ENCODE measurements at regions of chr1 and their contacts with region 1.

Region 1: DNA sequence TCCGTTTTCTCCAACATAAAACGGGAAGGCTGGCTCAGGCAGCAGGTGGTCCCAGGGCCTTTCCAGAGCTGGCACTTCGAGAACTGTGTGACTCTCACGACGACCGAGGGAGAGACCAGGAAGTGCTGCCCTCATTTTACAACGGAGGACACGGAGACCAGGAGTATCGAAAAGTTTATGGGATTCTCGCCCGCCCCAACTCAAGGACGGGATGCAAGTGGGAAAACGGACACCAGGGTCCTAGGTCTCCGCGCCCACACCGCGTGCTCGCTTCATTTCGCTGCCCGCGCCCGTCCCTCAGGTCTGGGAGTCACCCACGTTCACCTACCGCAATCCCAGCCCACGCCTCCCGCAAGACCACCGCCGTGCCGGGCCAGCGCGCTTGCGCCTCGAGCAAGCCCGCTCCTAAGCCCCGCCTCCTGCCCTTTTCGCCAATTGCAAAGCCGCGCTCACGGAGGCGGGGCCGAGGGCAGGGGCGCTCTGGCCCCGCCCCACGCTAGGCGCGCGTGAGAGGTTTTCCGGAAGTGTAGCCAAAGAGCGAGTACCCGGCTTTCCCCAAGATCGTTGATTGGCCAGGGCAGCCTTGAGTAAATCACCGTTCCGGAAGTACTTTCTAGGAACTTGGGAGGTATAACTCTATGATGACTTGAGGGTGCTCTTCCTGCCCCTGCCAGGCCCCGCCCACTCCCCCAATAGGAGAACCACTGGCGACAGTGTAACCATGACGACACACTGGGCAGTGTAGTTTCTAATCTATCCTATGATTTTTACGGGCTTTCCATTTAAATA is at the start of gene PARS2:
- DNase-seq: peak; percentile 98
- ATAC-seq: peak; percentile 100
- total RNA-seq, gene PARS2: 4.2 TPM

Region 2: DNA sequence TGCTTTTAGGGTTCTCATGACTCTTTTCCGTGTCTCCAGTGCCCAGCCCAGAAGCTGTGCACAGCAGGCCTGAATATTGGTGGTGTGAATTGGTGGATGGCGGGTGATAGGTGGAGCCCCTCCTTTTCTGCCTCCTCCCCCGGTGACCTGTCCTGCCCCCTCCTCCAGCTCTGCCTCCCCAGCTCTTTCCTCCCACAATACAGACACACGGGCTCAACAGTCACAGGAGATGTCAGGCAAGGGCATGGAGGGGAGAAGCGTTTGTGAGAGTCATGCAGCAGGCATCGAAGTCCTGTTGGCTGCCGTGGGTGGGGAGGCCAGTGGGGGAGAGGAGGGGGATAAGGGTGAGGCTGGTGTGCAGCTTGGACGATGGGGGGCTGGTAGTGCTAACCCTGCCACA is 66.0 kb before region 1 on chr1:
- intact Hi-C with region 1: no loop called
- DNase-seq: no peak
- ATAC-seq: no peak

Region 3: GRCh38 chr1:54715493-54716298 is 48.6 kb before region 1 on chr1 and contains the start of gene TTC4:
- intact Hi-C with region 1: loop called (anchors 5 kb)
- DNase-seq: peak; percentile 93
- ATAC-seq: peak; percentile 99
- total RNA-seq, gene TTC4: 12.8 TPM

Region 4: DNA sequence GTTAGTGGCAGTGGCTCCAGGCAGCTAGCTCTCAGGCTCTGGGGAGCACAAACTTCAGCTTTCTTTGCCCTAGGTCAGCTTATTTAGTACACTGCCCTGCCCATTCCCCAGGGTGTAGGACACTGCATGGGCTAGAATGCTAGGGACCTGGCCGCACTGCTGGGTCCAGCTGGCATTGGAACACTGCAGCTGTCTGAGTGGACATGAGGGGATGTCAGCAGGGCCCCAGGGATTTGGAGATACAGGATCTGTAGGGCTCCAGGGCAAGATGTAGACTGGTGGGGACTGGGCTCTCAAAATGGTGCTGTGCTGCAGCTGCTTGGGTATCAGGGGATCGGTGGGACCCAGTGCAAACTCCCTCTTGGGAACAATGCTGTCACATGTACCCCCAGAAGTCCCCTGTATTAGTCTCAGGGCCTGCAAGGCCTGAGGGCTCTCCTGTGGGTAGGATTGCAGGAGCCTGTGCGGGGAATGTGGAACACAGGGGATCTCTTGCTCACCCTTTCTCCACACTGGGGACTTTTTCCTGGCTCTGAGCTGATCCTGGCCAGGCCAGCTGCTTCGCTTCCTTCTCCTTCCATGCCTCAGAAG is 62.0 kb after region 1 on chr1:
- intact Hi-C with region 1: no loop called
- DNase-seq: no peak
- ATAC-seq: no peak

Region 5: GRCh38 chr1:54850737-54851136 is 86.4 kb after region 1 on chr1:
- intact Hi-C with region 1: no loop called
- DNase-seq: no peak
- ATAC-seq: no peak

Region 6: GRCh38 chr1:55050283-55050682 is 286.0 kb after region 1 on chr1:
- intact Hi-C with region 1: no loop called
- DNase-seq: no peak
- ATAC-seq: peak; percentile 15

Measured in Right ventricle myocardium inferior (tissue), 1 donor.